Posterior cingulate gyrus (tissue), 11 donors: ENCODE measurements at regions of chr5 and their contacts with region 1.

Region 1: GRCh38 chr5:116374434-116374852 is 200.2 kb downstream of the SEMA6A start:
- DNase-seq: no peak

Region 2: GRCh38 chr5:117547192-117547591 is 1172.7 kb after region 1 on chr5:
- intact Hi-C with region 1: loop called (anchors 5 kb)
- DNase-seq: no peak